ENCODE measurements at regions of chr2 and their contacts with region 1.

Region 1: GRCh38 chr2:102063941-102064678 is 72.3 kb downstream of the IL1R2 start:
- DNase-seq: no peak
- H3K4me3 Mint-ChIP-seq: no peak overlapping the region
- H3K27ac Mint-ChIP-seq: no peak overlapping the region
- H3K4me1 Mint-ChIP-seq: peaks cover 24% of the 10 kb centered on the region
- H3K27me3 Mint-ChIP-seq: peaks cover 11% of the 10 kb centered on the region

Region 2: GRCh38 chr2:102020596-102021181 is 43.4 kb before region 1 on chr2:
- intact Hi-C with region 1: loop called (anchors 2 kb)
- DNase-seq: peak; percentile 66
- H3K4me3 Mint-ChIP-seq: no peak overlapping the region
- H3K27ac Mint-ChIP-seq: no peak overlapping the region
- H3K4me1 Mint-ChIP-seq: peaks cover 12% of the 10 kb centered on the region
- H3K27me3 Mint-ChIP-seq: peaks cover 4% of the 10 kb centered on the region

Region 3: DNA sequence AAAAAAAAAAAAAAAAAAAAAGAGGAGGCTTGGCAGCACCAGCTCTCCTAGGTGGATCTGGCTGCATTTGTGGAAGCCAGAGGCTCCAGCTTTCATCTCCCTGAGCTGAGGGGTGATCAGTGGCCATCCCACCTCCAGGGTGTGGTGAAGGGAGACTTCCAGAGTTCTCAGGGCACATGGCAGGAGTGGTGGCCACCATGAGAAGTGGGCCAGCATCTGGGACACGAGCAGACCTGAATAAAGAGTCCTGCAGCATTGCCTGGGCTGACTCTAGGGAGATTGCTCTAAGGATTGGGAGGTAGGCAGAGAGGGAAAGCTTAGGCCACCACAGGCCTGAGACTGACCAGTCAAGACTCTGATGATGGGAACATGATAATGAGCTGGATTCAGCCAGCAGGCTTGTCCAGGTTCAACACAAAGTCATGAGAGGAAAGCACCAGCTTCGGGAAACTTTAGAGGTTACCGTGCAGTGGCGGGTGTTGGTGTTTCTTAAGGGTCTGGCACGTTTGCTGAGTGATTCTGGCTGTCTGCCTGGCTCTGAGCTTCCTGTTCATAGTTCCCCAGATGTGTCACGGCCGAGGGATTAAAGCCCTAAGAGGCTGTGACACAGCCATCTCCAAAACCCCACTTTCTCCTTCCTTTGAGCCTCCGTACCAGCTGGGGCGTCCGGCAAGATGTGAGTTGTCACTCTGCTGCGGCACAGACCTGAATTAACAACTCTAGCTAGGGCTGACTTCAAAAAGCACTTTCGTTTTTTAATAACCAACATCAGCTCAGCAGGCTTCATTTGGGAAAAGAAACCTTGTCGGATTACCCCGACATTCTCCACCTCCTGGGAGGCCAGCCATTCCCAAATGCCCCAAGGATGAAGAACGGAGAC is 40.1 kb after region 1 on chr2:
- intact Hi-C with region 1: loop called (anchors 2 kb)
- DNase-seq: no peak
- H3K4me3 Mint-ChIP-seq: peak overlapping the region; percentile 67
- H3K27ac Mint-ChIP-seq: no peak overlapping the region
- H3K4me1 Mint-ChIP-seq: peaks cover 25% of the 10 kb centered on the region
- H3K27me3 Mint-ChIP-seq: peaks cover 50% of the 10 kb centered on the region

Region 4: DNA sequence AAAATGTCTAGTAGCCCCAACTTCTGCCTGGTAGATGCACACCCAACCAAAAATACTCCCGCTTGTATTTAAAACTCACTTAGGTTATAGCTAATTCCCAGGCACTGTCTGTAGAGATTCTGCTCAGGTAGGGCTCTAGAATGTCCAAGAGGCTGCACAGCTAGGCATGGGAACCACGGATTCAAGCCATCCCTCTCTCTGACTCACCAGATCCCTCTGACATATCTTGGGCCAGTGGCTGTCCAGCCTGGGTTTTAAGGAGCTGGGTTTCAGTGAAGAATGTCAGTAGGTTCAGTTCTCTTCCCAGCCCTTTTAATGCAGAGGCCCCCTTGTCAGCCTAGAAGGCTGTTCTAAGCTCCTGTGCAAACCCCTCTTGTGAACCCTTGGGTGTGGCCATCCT is 62.5 kb after region 1 on chr2:
- intact Hi-C with region 1: loop called (anchors 1 kb)
- DNase-seq: no peak
- H3K4me3 Mint-ChIP-seq: no peak overlapping the region
- H3K27ac Mint-ChIP-seq: no peak overlapping the region
- H3K4me1 Mint-ChIP-seq: peaks cover 13% of the 10 kb centered on the region
- H3K27me3 Mint-ChIP-seq: peaks cover 31% of the 10 kb centered on the region

Region 5: GRCh38 chr2:102235491-102235890 is 171.4 kb after region 1 on chr2:
- intact Hi-C with region 1: loop called (anchors 2 kb)
- DNase-seq: no peak
- H3K4me3 Mint-ChIP-seq: no peak overlapping the region
- H3K27ac Mint-ChIP-seq: no peak overlapping the region
- H3K4me1 Mint-ChIP-seq: peaks cover 48% of the 10 kb centered on the region
- H3K27me3 Mint-ChIP-seq: peaks cover 2% of the 10 kb centered on the region

Measured in activated T-helper 2 cell treated with anti-CD3 and anti-CD28 coated beads, Interferon-gamma antibody, Interleukin-2, Interleukin-4, amounts not matched to agents 10 μg/mL and 5 μg/mL and 100 μg/mL, durations not matched to agents 14 hours and 24 hours and 36 hours (primary cell).